ENCODE measurements at regions of chr7 and their contacts with region 1.

Region 1: GRCh38 chr7:106176414-106177299 is 64.5 kb upstream of the SYPL1 start:
- DNase-seq: no peak
- H3K4me3 ChIP-seq: no peak overlapping the region
- H3K27ac ChIP-seq: peak overlapping the region; percentile 32
- H3K4me1 ChIP-seq: no peaks in the 10 kb centered on the region
- H3K27me3 ChIP-seq: no peaks in the 10 kb centered on the region
- CTCF ChIP-seq: peak; percentile 71 to 92 (median 88)
- POLR2A ChIP-seq: no peak

Region 2: DNA sequence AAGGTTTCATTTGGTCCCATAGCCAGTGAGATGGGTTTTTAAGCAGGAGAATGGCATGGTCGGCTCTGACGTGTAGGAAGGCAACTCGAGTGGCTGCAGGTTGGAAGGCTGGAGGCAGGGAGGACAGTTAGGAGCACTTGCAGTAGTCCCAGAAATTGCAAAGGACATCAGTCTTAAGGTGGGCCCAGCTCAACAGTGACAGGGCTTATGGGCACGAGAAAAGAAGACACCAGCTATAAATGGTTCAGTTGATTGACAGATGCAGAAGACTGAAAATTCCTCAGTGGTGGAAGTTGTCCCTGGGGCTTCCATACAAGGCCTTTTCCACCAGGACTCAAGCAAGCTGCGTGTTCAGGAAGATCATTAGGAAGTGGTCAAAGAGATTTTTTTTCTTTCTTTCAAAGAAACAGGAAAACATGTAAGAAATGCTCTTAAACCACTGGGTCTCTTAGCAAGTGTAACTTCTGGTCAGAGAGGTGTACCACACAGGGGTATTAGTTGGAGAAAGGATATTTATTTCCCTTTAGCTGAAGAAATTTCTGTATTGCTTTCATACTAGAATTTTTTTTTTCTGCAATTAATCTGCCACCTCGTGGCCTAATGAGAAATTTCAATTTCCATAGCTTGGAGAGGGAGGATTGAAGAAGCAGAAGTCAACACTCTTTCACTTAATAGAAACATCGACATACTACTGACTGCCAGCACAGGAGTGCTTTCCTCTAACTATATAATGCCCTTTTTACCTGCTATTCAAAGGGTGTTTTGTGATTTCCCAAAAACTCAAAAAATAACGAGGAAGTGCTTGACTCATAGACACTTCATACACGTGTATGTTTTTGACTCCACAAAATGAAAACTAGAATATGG is 285.6 kb after region 1 on chr7:
- intact Hi-C with region 1: loop called (anchors 2 kb)
- DNase-seq: no peak
- H3K4me3 ChIP-seq: no peak overlapping the region
- H3K27ac ChIP-seq: no peak overlapping the region
- H3K4me1 ChIP-seq: no peaks in the 10 kb centered on the region
- H3K27me3 ChIP-seq: no peaks in the 10 kb centered on the region
- CTCF ChIP-seq: peak; percentile 50 to 73 (median 71)
- POLR2A ChIP-seq: no peak

Region 3: GRCh38 chr7:106659963-106660861 is 483.6 kb after region 1 on chr7:
- intact Hi-C with region 1: loop called (anchors 10 kb)
- DNase-seq: no peak
- H3K4me3 ChIP-seq: peak overlapping the region; percentile 75 to 92
- H3K27ac ChIP-seq: peak overlapping the region; percentile 98
- H3K4me1 ChIP-seq: peaks cover 25% of the 10 kb centered on the region
- H3K27me3 ChIP-seq: no peaks in the 10 kb centered on the region
- CTCF ChIP-seq: peak in 2 of 3 experiments; percentile 38 to 44
- POLR2A ChIP-seq: no peak

Region 4: GRCh38 chr7:106736508-106737201 is 560.0 kb after region 1 on chr7:
- intact Hi-C with region 1: loop called (anchors 10 kb)
- DNase-seq: no peak
- H3K4me3 ChIP-seq: no peak overlapping the region
- H3K27ac ChIP-seq: no peak overlapping the region
- H3K4me1 ChIP-seq: peaks cover 8% of the 10 kb centered on the region
- H3K27me3 ChIP-seq: no peaks in the 10 kb centered on the region
- CTCF ChIP-seq: peak in 2 of 3 experiments; percentile 51 to 55
- POLR2A ChIP-seq: no peak

Region 5: DNA sequence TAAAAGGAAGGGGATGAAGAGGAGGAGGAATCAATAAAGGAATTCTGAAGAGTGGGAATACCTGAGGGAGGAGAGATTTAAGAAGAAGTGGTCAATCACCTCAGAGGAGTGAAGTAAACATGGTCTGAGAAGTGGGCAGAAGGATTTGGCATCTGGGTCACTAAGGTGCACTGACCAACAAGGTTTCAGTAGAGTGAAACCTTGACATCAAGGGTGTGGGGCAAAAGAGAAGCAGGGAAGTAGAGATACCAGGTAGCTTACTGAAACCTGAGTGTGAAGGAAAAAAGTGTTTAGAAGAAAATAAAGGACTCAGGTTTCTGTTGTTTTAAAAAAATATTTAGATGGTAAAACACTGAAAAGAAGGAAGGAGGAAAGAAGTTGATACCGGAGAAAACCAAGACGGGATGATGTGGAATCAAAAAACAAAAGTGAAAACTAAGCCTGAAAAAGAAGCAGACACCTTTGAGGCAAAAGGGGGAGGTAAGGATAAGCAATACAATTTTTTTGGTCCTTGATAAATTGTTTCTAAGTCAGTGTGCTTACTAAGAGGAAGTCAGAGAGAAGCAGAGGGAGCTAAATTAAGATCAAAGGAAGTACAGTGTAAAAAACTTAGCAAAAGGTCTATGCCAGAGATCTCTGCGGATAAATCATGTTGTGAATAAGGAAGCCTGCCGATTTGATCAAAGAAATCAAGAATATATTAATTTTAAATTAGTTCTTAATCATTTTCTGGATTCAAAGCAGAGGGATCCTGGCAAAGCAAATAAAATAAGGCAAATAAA is 1156.0 kb after region 1 on chr7:
- intact Hi-C with region 1: no loop called
- DNase-seq: no peak
- H3K4me3 ChIP-seq: no peak overlapping the region
- H3K27ac ChIP-seq: no peak overlapping the region
- H3K4me1 ChIP-seq: no peaks in the 10 kb centered on the region
- H3K27me3 ChIP-seq: no peaks in the 10 kb centered on the region
- CTCF ChIP-seq: no peak
- POLR2A ChIP-seq: no peak

Region 6: DNA sequence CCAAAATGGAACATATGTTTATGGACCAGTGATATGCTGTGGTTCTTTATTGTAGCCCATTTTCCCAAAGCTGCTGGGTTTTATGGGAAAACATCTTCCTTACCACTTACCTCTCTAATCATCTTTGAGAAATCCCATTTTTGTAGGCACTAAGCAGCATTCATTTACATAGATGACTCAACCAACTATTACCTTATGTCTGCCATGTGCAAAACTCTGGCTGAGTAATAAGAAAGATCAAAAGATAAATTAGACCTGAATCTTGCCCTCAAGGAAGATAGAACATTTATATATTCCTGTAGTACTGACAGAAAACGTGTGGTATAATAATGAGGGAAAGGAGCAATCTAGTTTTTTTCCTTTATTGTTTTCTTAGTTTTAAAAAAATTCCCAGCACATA is 1591.6 kb after region 1 on chr7:
- intact Hi-C with region 1: no loop called
- DNase-seq: no peak
- H3K4me3 ChIP-seq: no peak overlapping the region
- H3K27ac ChIP-seq: no peak overlapping the region
- H3K4me1 ChIP-seq: no peaks in the 10 kb centered on the region
- H3K27me3 ChIP-seq: no peaks in the 10 kb centered on the region
- CTCF ChIP-seq: no peak
- POLR2A ChIP-seq: no peak